ENCODE measurements at regions of chr2 and their contacts with region 1.

Region 1: GRCh38 chr2:101080211-101081068 is 70.7 kb downstream of the TBC1D8 start:
- DNase-seq: peak; percentile 88 to 94
- ATAC-seq: peak; percentile 87 to 93
- H3K4me3 ChIP-seq: no peak overlapping the region
- H3K27ac ChIP-seq: peak overlapping the region; percentile 91 to 95 (median 92)
- H3K4me1 ChIP-seq: peaks cover 57 to 66% of the 10 kb centered on the region in 2 donors
- H3K27me3 ChIP-seq: no peaks in the 10 kb centered on the region
- CTCF ChIP-seq: no peak
- POLR2A ChIP-seq: peak; percentile 33 to 42

Region 2: DNA sequence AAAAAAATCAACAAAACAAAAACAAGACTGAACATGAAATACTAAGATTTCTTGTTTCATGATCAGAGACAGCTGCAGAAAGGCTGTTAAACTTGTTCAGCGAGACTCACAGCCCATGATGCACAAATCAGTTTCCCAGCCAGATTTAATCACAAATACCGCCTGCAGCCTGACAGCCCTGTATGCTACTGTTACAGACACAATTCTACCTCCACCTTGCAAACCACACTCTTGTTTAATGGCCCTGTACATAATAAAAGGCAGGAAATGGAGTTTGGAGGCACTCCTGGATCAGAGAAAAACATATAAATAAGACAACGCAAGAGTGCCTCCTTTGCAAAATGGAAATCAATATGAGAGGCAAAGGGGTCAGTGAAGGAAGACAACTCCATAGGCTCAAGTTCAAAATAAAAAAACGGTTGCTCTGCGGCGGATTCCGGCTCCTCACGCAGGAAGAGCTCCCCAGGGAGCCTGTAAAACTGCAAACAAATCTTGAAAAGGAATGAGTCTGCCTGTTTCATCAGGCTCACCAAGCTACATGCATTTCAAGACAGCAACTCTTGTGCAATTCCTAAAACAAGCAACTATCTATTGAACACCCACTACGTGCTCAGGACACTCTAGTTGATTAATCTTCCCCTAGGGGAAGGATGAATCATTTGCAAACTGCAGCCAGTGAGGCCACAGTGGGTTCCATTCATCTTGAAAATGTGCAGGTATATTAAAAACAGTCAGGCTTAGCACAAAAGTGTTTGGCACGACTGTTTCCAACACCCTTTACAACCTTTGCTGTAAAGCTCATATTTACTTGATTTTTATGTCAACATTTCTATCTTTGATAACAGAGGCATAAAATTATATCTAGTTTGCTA is 33.2 kb after region 1 on chr2:
- in situ Hi-C with region 1: no loop called
- intact Hi-C with region 1: loop called (anchors 2 kb)
- DNase-seq: peak in 1 of 2 donors; percentile 47
- ATAC-seq: peak; percentile 22 to 25
- H3K4me3 ChIP-seq: peak overlapping the region in 3 of 4 donors; percentile 4 to 19 (median 9)
- H3K27ac ChIP-seq: peak overlapping the region; percentile 84 to 100 (median 99)
- H3K4me1 ChIP-seq: peaks cover 78 to 96% of the 10 kb centered on the region in 2 donors
- H3K27me3 ChIP-seq: no peaks in the 10 kb centered on the region
- CTCF ChIP-seq: peak in 2 of 5 experiments; percentile 10 to 20
- POLR2A ChIP-seq: peak in 1 of 2 donors; percentile 79

Region 3: GRCh38 chr2:101120172-101120996 is 39.9 kb after region 1 on chr2:
- in situ Hi-C with region 1: no loop called
- intact Hi-C with region 1: loop called (anchors 1 kb)
- DNase-seq: peak; percentile 97 to 100
- ATAC-seq: peak; percentile 77 to 80
- H3K4me3 ChIP-seq: peak overlapping the region in 1 of 4 donors; percentile 24
- H3K27ac ChIP-seq: peak overlapping the region; percentile 90 to 100 (median 99)
- H3K4me1 ChIP-seq: peaks cover 87 to 92% of the 10 kb centered on the region in 2 donors
- H3K27me3 ChIP-seq: no peaks in the 10 kb centered on the region
- CTCF ChIP-seq: no peak
- POLR2A ChIP-seq: peak in 1 of 2 donors; percentile 59